Calu3 (cell line): ENCODE measurements at regions of chr1 and their contacts with region 1.

Region 1: GRCh38 chr1:39799770-39800470 is 11.3 kb upstream of the BMP8B start:
- DNase-seq: peak; percentile 82
- H3K4me3 Mint-ChIP-seq: peak overlapping the region; percentile 26
- H3K27ac Mint-ChIP-seq: peak overlapping the region; percentile 36
- H3K4me1 Mint-ChIP-seq: no peaks in the 10 kb centered on the region
- H3K27me3 Mint-ChIP-seq: no peaks in the 10 kb centered on the region
- CTCF ChIP-seq: peak; percentile 95

Region 2: GRCh38 chr1:39701049-39701439 is 98.9 kb before region 1 on chr1:
- CTCF ChIA-PET with region 1: interaction called, 5 read pairs
- intact Hi-C with region 1: loop called (anchors 5 kb)
- DNase-seq: no peak
- H3K4me3 Mint-ChIP-seq: peak overlapping the region; percentile 5
- H3K27ac Mint-ChIP-seq: no peak overlapping the region
- H3K4me1 Mint-ChIP-seq: peaks cover 16% of the 10 kb centered on the region
- H3K27me3 Mint-ChIP-seq: peaks cover 63% of the 10 kb centered on the region
- CTCF ChIP-seq: no peak

Region 3: DNA sequence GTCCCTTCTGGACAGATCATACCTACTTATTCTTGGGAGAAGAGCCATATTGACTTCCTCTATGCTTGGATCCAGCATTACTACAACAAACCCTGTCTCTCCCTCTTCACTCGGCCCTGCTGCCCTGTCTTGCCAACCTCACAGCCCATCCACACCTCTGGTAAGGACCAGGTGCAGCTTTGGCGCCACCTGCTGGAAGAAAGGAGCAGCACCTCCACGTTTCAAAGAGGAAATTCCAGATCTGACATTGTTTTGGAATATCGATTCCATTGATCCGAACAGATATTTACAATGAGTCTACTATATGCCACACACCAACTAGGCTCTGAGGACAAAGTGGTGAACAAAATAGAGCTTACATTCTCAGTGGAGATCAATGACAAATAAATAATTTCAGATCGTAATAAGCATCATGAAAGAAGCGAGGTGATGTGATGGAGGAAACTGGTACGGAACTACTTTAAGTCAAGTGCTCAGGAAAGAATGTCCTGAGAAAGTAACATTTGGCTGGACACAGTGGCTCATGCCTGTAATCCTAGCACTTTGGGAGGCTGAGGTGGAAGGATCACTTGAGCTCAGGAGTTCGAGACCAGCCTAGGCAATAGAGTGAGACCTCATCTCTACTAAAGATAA is 173.7 kb after region 1 on chr1:
- CTCF ChIA-PET with region 1: no interaction called
- intact Hi-C with region 1: no loop called
- DNase-seq: peak; percentile 77
- H3K4me3 Mint-ChIP-seq: no peak overlapping the region
- H3K27ac Mint-ChIP-seq: no peak overlapping the region
- H3K4me1 Mint-ChIP-seq: peaks cover 6% of the 10 kb centered on the region
- H3K27me3 Mint-ChIP-seq: peaks cover 20% of the 10 kb centered on the region
- CTCF ChIP-seq: peak; percentile 94